Activated CD4-positive, alpha-beta memory T cell treated with anti-CD3 and anti-CD28 coated beads for 36 hours (primary cell): ENCODE measurements at regions of chr5 and their contacts with region 1.

Region 1: GRCh38 chr5:43019614-43020293 is 20.4 kb downstream of the ANXA2R start:
- DNase-seq: peak; percentile 91
- H3K4me3 Mint-ChIP-seq: peak overlapping the region; percentile 97
- H3K27ac Mint-ChIP-seq: peak overlapping the region; percentile 98
- H3K4me1 Mint-ChIP-seq: peaks cover 32% of the 10 kb centered on the region
- H3K27me3 Mint-ChIP-seq: no peaks in the 10 kb centered on the region

Region 2: GRCh38 chr5:42950440-42951292 is 69.1 kb before region 1 on chr5:
- CTCF ChIA-PET with region 1: interaction called, 6 read pairs
- POLR2A ChIA-PET with region 1: interaction called, 27 read pairs
- intact Hi-C with region 1: loop called (anchors 1 kb)
- DNase-seq: peak; percentile 86
- H3K4me3 Mint-ChIP-seq: peak overlapping the region; percentile 94
- H3K27ac Mint-ChIP-seq: peak overlapping the region; percentile 97
- H3K4me1 Mint-ChIP-seq: peaks cover 30% of the 10 kb centered on the region
- H3K27me3 Mint-ChIP-seq: no peaks in the 10 kb centered on the region

Region 3: GRCh38 chr5:42994246-42995151 is 25.3 kb before region 1 on chr5:
- CTCF ChIA-PET with region 1: interaction called, 126 read pairs
- POLR2A ChIA-PET with region 1: interaction called, 93 read pairs
- intact Hi-C with region 1: loop called (anchors 1 kb)
- DNase-seq: peak; percentile 93
- H3K4me3 Mint-ChIP-seq: peak overlapping the region; percentile 87
- H3K27ac Mint-ChIP-seq: peak overlapping the region; percentile 94
- H3K4me1 Mint-ChIP-seq: peaks cover 25% of the 10 kb centered on the region
- H3K27me3 Mint-ChIP-seq: no peaks in the 10 kb centered on the region

Region 4: DNA sequence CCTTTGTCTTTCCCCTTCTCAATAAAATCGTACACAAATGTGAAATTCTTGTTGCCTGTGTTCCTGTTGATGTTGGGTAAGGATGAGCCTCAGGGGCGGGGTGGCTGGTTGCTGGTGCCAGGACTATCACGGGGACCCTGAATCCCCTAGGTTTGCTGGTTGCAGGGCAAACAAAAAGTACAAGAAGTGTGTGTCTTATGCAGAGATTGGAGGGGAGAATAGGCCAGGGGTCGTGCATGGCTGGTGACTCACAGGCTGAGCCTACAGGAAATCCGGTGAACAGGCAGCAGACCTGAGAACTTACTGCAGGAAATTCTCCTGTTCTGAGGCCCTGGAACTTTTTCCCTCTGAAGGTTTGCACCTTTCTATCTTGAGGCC is 14.8 kb after region 1 on chr5:
- CTCF ChIA-PET with region 1: interaction called, 72 read pairs
- POLR2A ChIA-PET with region 1: interaction called, 26 read pairs
- intact Hi-C with region 1: loop called (anchors 1 kb)
- DNase-seq: no peak
- H3K4me3 Mint-ChIP-seq: no peak overlapping the region
- H3K27ac Mint-ChIP-seq: no peak overlapping the region
- H3K4me1 Mint-ChIP-seq: peaks cover 40% of the 10 kb centered on the region
- H3K27me3 Mint-ChIP-seq: no peaks in the 10 kb centered on the region

Region 5: DNA sequence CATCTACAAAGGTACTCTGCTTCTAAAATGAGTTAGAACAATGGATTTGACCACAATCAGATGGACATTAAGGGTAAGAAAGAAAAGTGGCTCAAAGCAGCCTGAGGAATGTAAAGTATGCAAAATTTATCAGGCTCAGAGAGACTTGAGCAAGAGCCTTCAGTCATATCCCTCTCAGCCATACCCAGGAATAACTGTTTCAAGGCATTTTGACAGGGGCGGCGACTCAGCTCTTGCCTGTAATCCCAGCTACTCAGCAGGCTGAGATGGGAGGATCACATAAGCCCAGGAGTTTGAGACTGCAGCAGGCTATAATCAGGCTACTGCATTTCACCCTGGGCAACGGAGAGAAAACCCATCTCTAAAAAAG is 59.2 kb after region 1 on chr5:
- CTCF ChIA-PET with region 1: no interaction called
- POLR2A ChIA-PET with region 1: no interaction called
- intact Hi-C with region 1: no loop called
- DNase-seq: no peak
- H3K4me3 Mint-ChIP-seq: no peak overlapping the region
- H3K27ac Mint-ChIP-seq: no peak overlapping the region
- H3K4me1 Mint-ChIP-seq: peaks cover 17% of the 10 kb centered on the region
- H3K27me3 Mint-ChIP-seq: no peaks in the 10 kb centered on the region